Activated T-helper 1 cell treated with anti-CD3 and anti-CD28 coated beads, Interleukin-12 subunit alpha, Interleukin-12 subunit beta, Interleukin-2, Interleukin-4 antibody, amounts not matched to agents 30 ng/mL and 10 ng/mL and 1 ng/mL, durations not matched to agents 14 hours and 24 hours and 36 hours (primary cell): ENCODE measurements at regions of chr5 and their contacts with region 1.

Region 1: GRCh38 chr5:160439205-160439600 is 17.5 kb downstream of the PTTG1 start:
- DNase-seq: peak; percentile 81
- H3K4me3 Mint-ChIP-seq: peak overlapping the region; percentile 82
- H3K27ac Mint-ChIP-seq: peak overlapping the region; percentile 96
- H3K4me1 Mint-ChIP-seq: peaks cover 74% of the 10 kb centered on the region
- H3K27me3 Mint-ChIP-seq: peaks cover 5% of the 10 kb centered on the region

Region 2: DNA sequence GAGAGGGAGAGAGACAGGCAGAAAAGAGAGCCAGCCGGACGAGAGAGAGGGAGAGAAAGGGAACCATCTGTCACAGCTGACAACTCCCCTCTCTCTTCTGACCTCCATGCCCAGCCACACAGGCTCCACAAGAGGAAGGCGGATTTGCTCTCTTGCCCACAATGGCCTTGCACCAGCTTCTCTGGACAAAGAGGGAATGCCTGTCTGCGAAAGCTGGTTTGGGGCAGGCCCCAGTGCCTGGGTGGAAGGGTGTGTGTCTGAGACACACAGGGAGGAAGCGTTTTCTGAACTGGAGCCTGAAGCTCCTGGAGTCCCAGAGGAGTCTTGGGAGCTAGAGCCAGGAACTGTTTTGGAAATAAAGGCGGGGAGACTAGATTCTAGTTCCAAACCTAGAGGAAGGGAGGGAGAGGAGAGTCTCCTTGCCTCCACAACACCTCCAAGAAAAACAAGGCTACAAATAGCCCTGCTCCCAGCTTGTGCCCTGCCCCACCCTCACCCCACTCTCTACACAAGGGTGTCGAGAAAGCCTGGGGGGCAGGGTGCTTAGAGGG is 81.3 kb before region 1 on chr5:
- intact Hi-C with region 1: no loop called
- DNase-seq: no peak
- H3K4me3 Mint-ChIP-seq: no peak overlapping the region
- H3K27ac Mint-ChIP-seq: no peak overlapping the region
- H3K4me1 Mint-ChIP-seq: no peaks in the 10 kb centered on the region
- H3K27me3 Mint-ChIP-seq: peaks cover 9% of the 10 kb centered on the region

Region 3: GRCh38 chr5:160450164-160450932 is 11.1 kb after region 1 on chr5:
- intact Hi-C with region 1: loop called (anchors 1 kb)
- DNase-seq: no peak
- H3K4me3 Mint-ChIP-seq: no peak overlapping the region
- H3K27ac Mint-ChIP-seq: peak overlapping the region; percentile 10
- H3K4me1 Mint-ChIP-seq: peaks cover 64% of the 10 kb centered on the region
- H3K27me3 Mint-ChIP-seq: no peaks in the 10 kb centered on the region

Region 4: DNA sequence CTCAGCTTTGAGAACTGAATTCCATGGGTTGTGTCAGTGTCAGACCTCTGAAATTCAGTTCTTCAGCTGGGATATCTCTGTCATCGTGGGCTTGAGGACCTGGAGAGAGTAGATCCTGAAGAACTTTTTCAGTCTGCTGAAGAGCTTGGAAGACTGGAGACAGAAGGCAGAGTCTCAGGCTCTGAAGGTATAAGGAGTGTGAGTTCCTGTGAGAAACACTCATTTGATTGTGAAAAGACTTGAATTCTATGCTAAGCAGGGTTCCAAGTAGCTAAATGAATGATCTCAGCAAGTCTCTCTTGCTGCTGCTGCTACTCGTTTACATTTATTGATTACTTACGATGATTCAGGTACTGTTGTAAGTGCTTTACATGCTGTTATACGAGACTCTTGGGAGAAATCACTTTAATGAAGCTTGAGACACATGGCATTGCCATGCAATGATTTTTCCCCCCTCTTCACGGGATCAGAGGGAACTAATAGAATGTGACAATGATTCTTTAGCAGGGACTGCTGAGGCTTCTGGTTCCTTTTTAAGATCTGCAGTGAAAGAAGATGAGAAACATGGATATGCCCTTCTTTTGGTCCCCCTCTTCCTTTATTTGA is 46.3 kb after region 1 on chr5:
- intact Hi-C with region 1: no loop called
- DNase-seq: no peak
- H3K4me3 Mint-ChIP-seq: no peak overlapping the region
- H3K27ac Mint-ChIP-seq: peak overlapping the region; percentile 16
- H3K4me1 Mint-ChIP-seq: peaks cover 63% of the 10 kb centered on the region
- H3K27me3 Mint-ChIP-seq: no peaks in the 10 kb centered on the region

Region 5: DNA sequence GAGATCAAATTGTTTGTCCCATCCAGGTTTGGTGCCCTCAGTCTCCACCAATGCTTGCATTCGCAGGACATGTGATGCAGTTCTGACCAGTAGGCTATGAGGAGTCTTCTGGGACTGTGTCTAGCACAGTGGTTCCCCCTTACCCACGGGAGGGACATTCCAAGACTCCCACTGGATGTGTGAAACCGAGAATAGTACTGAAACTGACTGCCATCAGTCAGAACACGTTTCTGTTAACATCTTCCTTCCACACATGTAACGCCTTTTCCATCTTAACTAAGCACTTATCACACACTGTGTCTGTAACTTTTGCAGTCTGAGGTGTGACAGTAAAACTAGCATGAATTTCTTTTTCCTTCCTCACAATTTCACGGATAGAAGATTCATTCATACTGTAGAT is 57.1 kb after region 1 on chr5:
- intact Hi-C with region 1: loop called (anchors 1 kb)
- DNase-seq: no peak
- H3K4me3 Mint-ChIP-seq: no peak overlapping the region
- H3K27ac Mint-ChIP-seq: peak overlapping the region; percentile 69
- H3K4me1 Mint-ChIP-seq: peaks cover 29% of the 10 kb centered on the region
- H3K27me3 Mint-ChIP-seq: no peaks in the 10 kb centered on the region

Region 6: GRCh38 chr5:160657068-160657507 is 217.9 kb after region 1 on chr5:
- intact Hi-C with region 1: loop called (anchors 5 kb)
- DNase-seq: no peak
- H3K4me3 Mint-ChIP-seq: peak overlapping the region; percentile 19
- H3K27ac Mint-ChIP-seq: peak overlapping the region; percentile 15
- H3K4me1 Mint-ChIP-seq: peaks cover 16% of the 10 kb centered on the region
- H3K27me3 Mint-ChIP-seq: peaks cover 2% of the 10 kb centered on the region

Region 7: GRCh38 chr5:160970605-160971191 is 531.5 kb after region 1 on chr5:
- intact Hi-C with region 1: loop called (anchors 10 kb)
- DNase-seq: no peak
- H3K4me3 Mint-ChIP-seq: no peak overlapping the region
- H3K27ac Mint-ChIP-seq: no peak overlapping the region
- H3K4me1 Mint-ChIP-seq: no peaks in the 10 kb centered on the region
- H3K27me3 Mint-ChIP-seq: peaks cover 3% of the 10 kb centered on the region